Naive thymus-derived CD8-positive, alpha-beta T cell (primary cell): ENCODE measurements at regions of chrX and their contacts with region 1.

Region 1: DNA sequence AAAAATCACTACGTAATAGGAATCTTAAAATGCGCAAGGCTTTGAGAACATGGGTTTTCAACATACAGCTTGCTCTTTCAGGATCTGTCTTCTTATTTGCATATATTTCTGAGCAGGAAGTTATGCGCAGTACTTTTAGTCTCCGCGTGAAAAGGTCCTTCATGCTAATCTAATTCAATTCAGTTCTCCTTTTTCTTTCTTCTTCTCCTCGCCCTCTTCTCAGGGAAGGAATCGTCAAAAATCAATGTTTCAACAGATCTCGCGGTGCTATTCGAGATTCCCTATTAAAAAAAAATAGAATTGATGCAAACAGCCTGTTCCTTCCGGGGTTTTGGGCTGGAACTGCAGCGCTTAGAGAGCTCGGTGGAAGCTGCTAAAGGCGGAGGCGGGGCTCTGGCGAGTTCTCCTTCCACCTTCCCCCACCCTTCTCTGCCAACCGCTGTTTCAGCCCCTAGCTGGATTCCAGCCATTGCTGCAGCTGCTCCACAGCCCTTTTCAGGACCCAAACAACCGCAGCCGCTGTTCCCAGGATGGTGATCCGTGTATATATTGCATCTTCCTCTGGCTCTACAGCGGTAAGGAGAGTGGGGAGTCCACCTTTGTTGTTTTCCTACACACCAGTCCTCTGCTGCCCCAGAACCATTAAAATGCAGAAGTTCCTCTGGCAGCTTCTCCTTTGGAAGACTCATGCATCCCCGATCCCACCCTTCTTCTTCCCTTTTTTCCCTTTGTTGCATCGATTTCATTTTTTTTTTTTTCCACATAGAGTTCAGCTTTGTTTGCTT is at the starts of genes HMGN5 and SH3BGRL:
- DNase-seq: peak; percentile 41 to 82 (median 64)
- ATAC-seq: peak; percentile 94 to 96
- H3K4me3 Mint-ChIP-seq: peak within 1 kb of the TSS; percentile 94 to 99 (median 97)
- H3K27ac Mint-ChIP-seq: peak within 1 kb of the TSS; percentile 95 to 99 (median 97)
- H3K4me1 Mint-ChIP-seq: peaks cover 18 to 60% (median 45%) of the 10 kb centered on the region in 4 donors
- H3K27me3 Mint-ChIP-seq: no peaks in the 10 kb centered on the region
- polyA plus RNA-seq, gene HMGN5: 3.6 to 7.4 (median 6.8) TPM
- polyA plus RNA-seq, gene SH3BGRL: 155 to 206 (median 162) TPM

Region 2: GRCh38 chrX:80808160-80808735 is 393.6 kb before region 1 on chrX:
- POLR2A ChIA-PET with region 1: interaction called, 19 read pairs
- DNase-seq: peak; percentile 40 to 87 (median 78)
- ATAC-seq: peak; percentile 68 to 69
- H3K4me3 Mint-ChIP-seq: peak overlapping the region; percentile 88 to 95 (median 92)
- H3K27ac Mint-ChIP-seq: peak overlapping the region; percentile 94 to 100 (median 96)
- H3K4me1 Mint-ChIP-seq: peaks cover 11 to 40% (median 25%) of the 10 kb centered on the region in 4 donors
- H3K27me3 Mint-ChIP-seq: peaks cover 0 to 4% (median 0%) of the 10 kb centered on the region in 5 donors